GM12878 (cell line): ENCODE measurements at regions of chr1 and their contacts with region 1.

Region 1: GRCh38 chr1:44985747-44986359 is 542 bp downstream of the EIF2B3 start:
- DNase-seq: no peak
- ATAC-seq: peak; percentile 20
- H3K4me3 ChIP-seq: peak overlapping the region; percentile 86
- H3K27ac ChIP-seq: peak overlapping the region; percentile 56
- H3K4me1 ChIP-seq: peaks cover 9% of the 10 kb centered on the region
- H3K27me3 ChIP-seq: no peaks in the 10 kb centered on the region
- CTCF ChIP-seq: no peak
- EP300 ChIP-seq: no peak
- POLR2A ChIP-seq: no peak
- RAD21 ChIP-seq: no peak

Region 2: GRCh38 chr1:44903011-44903680 is 82.7 kb before region 1 on chr1:
- CTCF ChIA-PET with region 1: no interaction called
- POLR2A ChIA-PET with region 1: no interaction called
- RAD21 ChIA-PET with region 1: no interaction called
- SMC1A ChIA-PET with region 1: no interaction called
- in situ Hi-C with region 1: no loop called
- intact Hi-C with region 1: no loop called
- DNase-seq: no peak
- ATAC-seq: no peak
- H3K4me3 ChIP-seq: no peak overlapping the region
- H3K27ac ChIP-seq: no peak overlapping the region
- H3K4me1 ChIP-seq: no peaks in the 10 kb centered on the region
- H3K27me3 ChIP-seq: no peaks in the 10 kb centered on the region
- CTCF ChIP-seq: no peak
- EP300 ChIP-seq: no peak
- POLR2A ChIP-seq: no peak
- RAD21 ChIP-seq: no peak

Region 3: DNA sequence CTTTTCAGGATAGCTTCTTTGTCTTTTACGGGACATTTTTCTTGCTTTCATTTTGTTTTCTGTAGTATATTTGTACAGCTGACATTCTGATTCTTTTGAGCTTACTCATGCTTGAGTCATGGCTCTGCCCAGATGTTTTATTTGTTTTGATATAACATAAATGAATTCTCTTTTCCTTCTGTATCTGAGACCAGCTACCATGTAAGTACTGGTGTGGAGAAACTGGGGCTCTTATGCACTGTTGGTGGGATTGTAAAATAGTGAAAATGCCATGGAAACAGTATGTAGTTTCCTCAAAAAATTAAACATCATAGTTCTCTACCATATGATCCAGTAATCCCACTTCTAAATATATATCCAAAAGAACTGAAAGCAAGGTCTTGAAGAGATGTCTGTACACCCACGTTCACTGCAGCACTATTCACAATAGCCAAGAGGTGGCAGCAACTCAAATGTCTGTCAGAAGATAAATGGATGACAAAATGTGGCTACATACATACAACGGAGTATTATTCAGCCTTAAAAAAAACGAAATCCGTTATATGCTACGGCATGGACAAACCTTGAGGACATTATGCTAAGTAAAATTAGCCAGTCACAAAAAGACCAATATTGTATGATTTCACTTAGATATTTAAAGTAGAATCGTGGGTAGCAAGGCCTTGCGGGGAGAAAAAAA is 60.9 kb before region 1 on chr1:
- CTCF ChIA-PET with region 1: no interaction called
- POLR2A ChIA-PET with region 1: no interaction called
- RAD21 ChIA-PET with region 1: no interaction called
- SMC1A ChIA-PET with region 1: no interaction called
- in situ Hi-C with region 1: no loop called
- intact Hi-C with region 1: loop called (anchors 1 kb)
- DNase-seq: no peak
- ATAC-seq: peak; percentile 57
- H3K4me3 ChIP-seq: no peak overlapping the region
- H3K27ac ChIP-seq: no peak overlapping the region
- H3K4me1 ChIP-seq: no peaks in the 10 kb centered on the region
- H3K27me3 ChIP-seq: no peaks in the 10 kb centered on the region
- CTCF ChIP-seq: peak; percentile 31 to 51 (median 47); a peak in 4 of 6 replicates
- EP300 ChIP-seq: no peak
- POLR2A ChIP-seq: no peak
- RAD21 ChIP-seq: 0 out of 2 replicates have a peak, but pooled peaks have one; percentile 24